ENCODE measurements at regions of chr11 and their contacts with region 1.

Region 1: GRCh38 chr11:14643697-14644225 is at the start of gene PDE3B:
- DNase-seq: peak; percentile 69
- H3K4me3 Mint-ChIP-seq: peak within 1 kb of the TSS; percentile 91
- H3K27ac Mint-ChIP-seq: peak within 1 kb of the TSS; percentile 92
- H3K4me1 Mint-ChIP-seq: peaks cover 52% of the 10 kb centered on the region
- H3K27me3 Mint-ChIP-seq: no peaks in the 10 kb centered on the region
- total RNA-seq, gene PDE3B: 62.8 and 64.0 TPM in 2 replicates

Region 2: DNA sequence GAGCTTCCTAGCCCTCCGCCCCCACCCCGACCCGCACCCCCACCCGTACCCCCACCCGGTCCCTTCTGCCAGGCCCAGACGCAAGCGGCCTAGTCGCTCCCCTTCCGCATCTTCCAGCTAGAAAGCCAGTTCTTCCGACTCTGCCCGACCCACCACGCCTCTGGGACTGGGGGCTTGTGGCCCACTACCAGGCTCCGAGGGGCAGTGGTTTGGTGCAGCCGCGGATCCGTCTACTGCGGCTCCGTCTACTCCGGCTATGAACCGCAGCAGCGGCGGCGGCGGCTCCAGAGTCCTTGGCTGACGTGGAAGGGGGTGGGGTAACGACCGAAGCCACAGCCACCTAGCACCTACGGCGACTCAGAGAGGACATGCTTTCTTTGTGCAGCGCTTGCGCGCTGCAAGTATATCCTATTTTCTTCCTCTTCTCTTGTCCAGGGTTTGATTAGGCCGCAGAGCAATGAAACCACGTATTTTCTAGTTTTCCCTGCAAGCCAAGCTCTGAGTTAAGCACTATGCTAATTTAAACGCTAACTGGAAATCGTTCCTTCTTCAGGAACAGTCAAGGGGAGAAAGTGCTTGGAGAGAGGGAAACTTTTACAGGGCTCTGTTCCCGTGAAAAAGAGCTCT is 144.1 kb before region 1 on chr11 and contains the start of gene COPB1:
- intact Hi-C with region 1: loop called (anchors 1 kb)
- DNase-seq: peak; percentile 90
- H3K4me3 Mint-ChIP-seq: peak within 1 kb of the TSS; percentile 100
- H3K27ac Mint-ChIP-seq: peak within 1 kb of the TSS; percentile 98
- H3K4me1 Mint-ChIP-seq: peaks cover 49% of the 10 kb centered on the region
- H3K27me3 Mint-ChIP-seq: no peaks in the 10 kb centered on the region
- total RNA-seq, gene COPB1: 94.8 and 101 TPM in 2 replicates

Region 3: GRCh38 chr11:14544611-14545010 is 99.2 kb before region 1 on chr11:
- intact Hi-C with region 1: loop called (anchors 1 kb)
- DNase-seq: no peak
- H3K4me3 Mint-ChIP-seq: peak overlapping the region; percentile 45
- H3K27ac Mint-ChIP-seq: peak overlapping the region; percentile 91
- H3K4me1 Mint-ChIP-seq: peaks cover 73% of the 10 kb centered on the region
- H3K27me3 Mint-ChIP-seq: no peaks in the 10 kb centered on the region

Region 4: DNA sequence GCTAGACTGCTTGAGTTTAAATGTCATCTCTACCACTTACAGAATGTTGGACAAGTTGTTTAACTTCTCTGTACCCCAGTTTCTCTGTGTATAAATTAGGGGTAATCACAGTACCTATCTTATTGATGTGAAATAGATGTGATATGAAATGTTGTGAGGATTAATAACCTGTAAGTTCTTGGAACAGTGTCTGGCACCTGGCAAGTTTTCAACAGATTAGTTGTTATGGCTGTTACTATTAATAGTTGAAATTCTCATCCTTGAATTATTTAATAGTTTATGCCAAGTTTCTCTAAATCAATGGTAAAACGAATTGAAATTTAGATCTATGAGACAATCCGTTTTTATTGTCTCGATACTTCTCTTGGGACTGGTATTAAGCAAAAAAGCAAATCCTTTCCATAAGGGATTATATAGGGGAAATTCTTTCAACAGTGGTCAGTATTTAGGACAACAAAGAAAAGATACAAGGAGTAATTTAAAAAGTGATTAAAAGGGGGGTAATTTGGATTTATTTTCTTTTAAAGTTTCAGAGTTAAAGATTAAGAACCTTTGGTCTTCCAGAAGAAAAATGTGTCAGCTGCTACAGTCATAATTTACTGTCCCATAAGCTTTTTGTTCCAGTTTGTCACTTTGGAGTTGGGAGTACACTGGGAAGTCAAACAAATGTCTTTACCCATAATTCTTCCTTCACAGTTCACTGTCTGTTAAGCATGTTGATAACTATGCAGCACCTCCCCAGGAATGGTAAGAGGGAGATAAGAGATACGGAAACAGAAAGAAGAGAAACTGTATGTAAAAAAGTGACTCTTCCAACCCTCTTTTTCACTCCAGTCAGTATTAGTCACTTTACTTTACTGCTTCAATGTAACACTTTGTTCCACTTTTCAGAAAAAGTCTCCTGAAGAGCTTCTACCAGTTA is 13.0 kb after region 1 on chr11:
- intact Hi-C with region 1: loop called (anchors 1 kb)
- DNase-seq: no peak
- H3K4me3 Mint-ChIP-seq: no peak overlapping the region
- H3K27ac Mint-ChIP-seq: peak overlapping the region; percentile 8
- H3K4me1 Mint-ChIP-seq: peaks cover 53% of the 10 kb centered on the region
- H3K27me3 Mint-ChIP-seq: no peaks in the 10 kb centered on the region

Region 5: DNA sequence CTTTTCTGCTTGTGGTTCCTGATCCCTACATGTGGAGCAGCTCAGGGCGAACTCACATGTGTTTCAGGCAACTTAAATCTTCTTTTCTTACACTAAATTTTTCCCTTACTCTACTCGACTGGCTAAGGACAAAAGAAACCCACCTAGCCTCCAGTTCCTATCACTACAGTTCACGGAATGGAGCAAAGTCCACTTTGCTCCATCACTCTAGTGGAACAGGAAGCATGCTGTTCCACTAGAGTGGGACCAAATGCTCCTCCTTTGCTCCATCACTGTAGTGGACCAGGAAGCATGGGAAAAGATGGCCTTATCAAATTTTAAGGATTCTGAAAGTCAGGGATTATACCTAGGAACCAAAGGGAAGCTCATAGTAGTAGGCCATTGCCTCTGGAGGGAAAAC is 35.9 kb after region 1 on chr11:
- intact Hi-C with region 1: no loop called
- DNase-seq: no peak
- H3K4me3 Mint-ChIP-seq: no peak overlapping the region
- H3K27ac Mint-ChIP-seq: peak overlapping the region; percentile 31
- H3K4me1 Mint-ChIP-seq: peaks cover 59% of the 10 kb centered on the region
- H3K27me3 Mint-ChIP-seq: no peaks in the 10 kb centered on the region

Region 6: DNA sequence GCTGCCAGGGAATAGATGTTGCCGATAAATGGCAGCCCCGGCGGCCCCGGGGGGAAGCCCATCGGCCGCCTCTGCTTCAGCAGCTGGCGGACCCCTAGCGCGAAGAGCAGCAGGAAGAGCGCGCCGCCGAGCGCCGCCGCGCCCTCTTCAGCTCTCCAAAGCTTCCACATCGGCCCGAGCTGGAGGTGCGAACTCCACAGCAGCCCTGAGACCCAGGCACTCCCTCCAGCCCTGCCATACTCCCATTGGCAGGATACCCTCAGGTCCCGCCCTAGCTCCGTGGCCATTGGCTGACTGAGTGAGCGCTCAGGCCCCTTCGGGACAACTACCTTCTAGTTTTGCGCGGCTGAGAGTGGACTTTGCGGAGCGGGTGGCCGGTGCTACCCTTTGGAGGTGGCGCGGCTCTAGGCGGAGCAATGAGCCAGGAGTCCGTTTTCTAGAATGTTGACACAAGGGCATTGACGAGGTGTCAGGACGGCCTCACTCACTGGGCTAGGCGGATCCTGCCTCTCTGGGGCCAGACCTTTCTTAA is 248.3 kb after region 1 on chr11 and contains the start of gene CYP2R1:
- intact Hi-C with region 1: loop called (anchors 1 kb)
- DNase-seq: peak; percentile 90
- H3K4me3 Mint-ChIP-seq: peak within 1 kb of the TSS; percentile 90
- H3K27ac Mint-ChIP-seq: peak within 1 kb of the TSS; percentile 98
- H3K4me1 Mint-ChIP-seq: peaks cover 61% of the 10 kb centered on the region
- H3K27me3 Mint-ChIP-seq: no peaks in the 10 kb centered on the region
- total RNA-seq, gene CYP2R1: 13.7 and 14.3 TPM in 2 replicates